Esophagus muscularis mucosa (tissue), 4 donors: ENCODE measurements at regions of chr7 and their contacts with region 1.

Region 1: DNA sequence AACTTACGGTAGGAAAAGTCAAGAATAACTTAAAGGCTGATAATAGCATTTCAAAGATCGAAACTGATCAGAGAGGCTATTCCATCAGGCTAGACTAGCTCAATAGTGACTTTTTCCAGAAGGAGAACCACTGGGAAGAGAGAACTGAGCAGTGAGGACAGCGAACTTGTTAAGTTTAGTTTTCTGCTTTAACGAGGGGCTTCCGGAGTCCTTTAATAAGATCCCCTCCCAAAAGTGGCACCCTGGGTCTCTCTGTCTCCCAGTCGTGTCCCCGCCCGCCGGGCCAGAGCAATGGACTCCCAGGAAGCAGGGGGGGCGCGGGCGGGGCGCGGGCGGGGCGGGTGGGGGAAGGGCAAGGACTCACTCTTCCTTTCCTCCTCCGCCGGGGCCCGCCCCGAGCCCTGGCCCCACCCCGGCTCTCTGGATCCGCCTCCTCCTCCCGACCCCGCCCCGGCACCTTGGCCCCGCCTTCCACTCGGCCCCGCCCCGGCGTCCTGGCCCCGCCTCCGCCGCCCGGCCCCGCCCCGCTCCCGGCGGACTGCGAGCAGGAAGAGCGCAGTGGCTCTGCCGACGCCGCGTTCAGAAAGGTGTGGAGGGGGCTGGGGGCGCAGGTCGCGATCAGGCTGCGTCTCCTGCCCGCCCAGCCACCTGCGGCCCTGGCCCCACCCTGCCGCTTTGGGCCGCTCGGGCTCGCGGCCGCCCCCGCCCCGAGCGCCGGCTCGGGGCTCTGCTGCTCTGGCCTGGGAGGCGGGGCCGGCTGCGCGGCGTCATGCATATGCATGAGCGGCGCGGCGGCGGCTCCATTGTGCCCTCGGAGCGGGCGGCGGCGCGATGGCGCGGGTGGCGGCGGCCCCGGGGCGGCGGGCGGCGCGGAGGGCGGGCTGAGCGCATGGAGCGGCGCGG is at the start of gene ZMIZ2:
- DNase-seq: peak; percentile 98
- H3K4me3 ChIP-seq: peak within 1 kb of the TSS; percentile 81 to 99 (median 87)
- H3K27ac ChIP-seq: peak within 1 kb of the TSS; percentile 97 to 99 (median 98)
- H3K4me1 ChIP-seq: peaks cover 27 to 41% (median 33%) of the 10 kb centered on the region in 4 donors
- H3K27me3 ChIP-seq: no peaks in the 10 kb centered on the region
- CTCF ChIP-seq: peak in 1 of 3 experiments; percentile 13
- EP300 ChIP-seq: no peak
- POLR2A ChIP-seq: no peak
- total RNA-seq, gene ZMIZ2: 12.4 to 36.0 (median 28.4) TPM

Region 2: GRCh38 chr7:44587843-44588711 is 160.2 kb before region 1 on chr7:
- intact Hi-C with region 1: loop called (anchors 5 kb)
- DNase-seq: no peak
- H3K4me3 ChIP-seq: no peak overlapping the region
- H3K27ac ChIP-seq: no peak overlapping the region
- H3K4me1 ChIP-seq: peaks cover 0 to 9% (median 4%) of the 10 kb centered on the region in 4 donors
- H3K27me3 ChIP-seq: no peaks in the 10 kb centered on the region
- CTCF ChIP-seq: peak; percentile 53 to 60 (median 55)
- EP300 ChIP-seq: no peak
- POLR2A ChIP-seq: no peak

Region 3: DNA sequence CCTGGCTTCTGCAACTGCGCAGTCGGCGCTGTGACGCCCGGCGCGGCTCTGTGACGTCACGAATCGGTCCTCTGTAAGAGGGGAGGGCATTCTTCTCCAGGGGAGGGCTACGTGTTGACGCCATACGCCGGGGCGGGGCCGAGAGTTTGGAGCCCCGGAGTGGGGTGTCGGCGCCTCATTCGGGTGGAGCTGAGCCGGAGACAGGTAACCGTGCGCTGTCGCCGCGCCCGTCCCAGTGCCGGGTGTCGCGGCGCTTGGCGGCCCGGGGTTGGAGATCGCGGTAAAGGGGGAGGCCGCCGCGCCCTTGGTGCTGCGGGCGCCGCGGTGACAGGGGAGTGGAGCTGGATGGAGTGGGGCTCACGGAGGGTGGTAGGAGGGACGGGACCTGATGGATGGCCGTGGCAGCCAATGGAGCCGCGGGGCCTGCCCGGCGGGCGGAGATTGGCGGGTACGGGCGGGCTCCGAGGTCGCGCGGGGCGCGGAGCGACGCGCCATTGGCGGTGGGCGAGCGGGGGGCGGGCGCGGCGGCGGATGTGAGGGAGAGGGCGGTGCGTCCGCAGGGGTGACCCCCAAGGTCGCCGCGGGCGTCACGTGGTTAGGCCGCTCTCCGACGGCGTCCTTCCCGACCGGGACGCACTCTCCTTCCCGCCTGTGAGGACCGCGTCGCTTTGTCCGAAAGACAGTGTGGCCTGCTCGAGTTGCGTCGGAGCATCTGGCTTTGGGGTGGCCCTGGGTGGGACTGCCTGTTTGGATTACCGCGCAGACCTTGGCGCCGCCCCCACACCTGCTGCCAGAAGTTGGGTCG is 141.6 kb before region 1 on chr7 and contains the start of gene OGDH:
- intact Hi-C with region 1: loop called (anchors 2 kb)
- DNase-seq: peak; percentile 100
- H3K4me3 ChIP-seq: peak within 1 kb of the TSS; percentile 77 to 86 (median 82)
- H3K27ac ChIP-seq: peak within 1 kb of the TSS; percentile 95 to 99 (median 98)
- H3K4me1 ChIP-seq: peaks cover 25 to 42% (median 36%) of the 10 kb centered on the region in 4 donors
- H3K27me3 ChIP-seq: no peaks in the 10 kb centered on the region
- CTCF ChIP-seq: no peak
- EP300 ChIP-seq: peak; percentile 74
- POLR2A ChIP-seq: peak; percentile 84
- total RNA-seq, gene OGDH: 135 to 184 (median 145) TPM

Region 4: GRCh38 chr7:44797329-44798251 is 49.3 kb after region 1 on chr7:
- intact Hi-C with region 1: loop called (anchors 2 kb)
- DNase-seq: peak; percentile 96
- H3K4me3 ChIP-seq: peak overlapping the region; percentile 75 to 91 (median 86)
- H3K27ac ChIP-seq: peak overlapping the region; percentile 95 to 100 (median 100)
- H3K4me1 ChIP-seq: peaks cover 25 to 46% (median 40%) of the 10 kb centered on the region in 4 donors
- H3K27me3 ChIP-seq: no peaks in the 10 kb centered on the region
- CTCF ChIP-seq: peak; percentile 22 to 38 (median 35)
- EP300 ChIP-seq: peak; percentile 45
- POLR2A ChIP-seq: no peak

Region 5: DNA sequence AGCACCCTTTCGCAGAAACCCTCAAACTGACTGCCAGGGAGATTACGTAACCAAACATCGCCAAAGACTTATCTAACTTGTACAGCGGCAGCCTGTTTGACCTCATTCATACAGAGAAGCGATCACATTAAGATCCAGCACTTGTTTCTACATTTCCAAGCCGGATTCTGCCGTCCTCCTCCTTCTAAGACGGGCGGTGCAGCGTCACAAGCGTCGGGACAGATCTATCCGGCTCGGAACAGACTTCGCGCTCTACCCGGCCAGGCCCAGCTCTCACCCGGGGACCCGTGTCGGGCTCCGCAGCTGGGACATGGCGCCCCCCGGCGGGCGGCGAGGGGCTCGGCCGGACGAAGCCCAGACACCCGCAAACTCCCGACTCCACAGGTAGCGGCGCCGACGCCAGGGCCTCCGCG is 99.2 kb after region 1 on chr7:
- intact Hi-C with region 1: loop called (anchors 5 kb)
- DNase-seq: peak; percentile 97
- H3K4me3 ChIP-seq: peak overlapping the region; percentile 79 to 87 (median 80)
- H3K27ac ChIP-seq: peak overlapping the region; percentile 92 to 99 (median 98)
- H3K4me1 ChIP-seq: peaks cover 28 to 51% (median 41%) of the 10 kb centered on the region in 4 donors
- H3K27me3 ChIP-seq: no peaks in the 10 kb centered on the region
- CTCF ChIP-seq: peak; percentile 87 to 92 (median 91)
- EP300 ChIP-seq: no peak
- POLR2A ChIP-seq: no peak

Region 6: DNA sequence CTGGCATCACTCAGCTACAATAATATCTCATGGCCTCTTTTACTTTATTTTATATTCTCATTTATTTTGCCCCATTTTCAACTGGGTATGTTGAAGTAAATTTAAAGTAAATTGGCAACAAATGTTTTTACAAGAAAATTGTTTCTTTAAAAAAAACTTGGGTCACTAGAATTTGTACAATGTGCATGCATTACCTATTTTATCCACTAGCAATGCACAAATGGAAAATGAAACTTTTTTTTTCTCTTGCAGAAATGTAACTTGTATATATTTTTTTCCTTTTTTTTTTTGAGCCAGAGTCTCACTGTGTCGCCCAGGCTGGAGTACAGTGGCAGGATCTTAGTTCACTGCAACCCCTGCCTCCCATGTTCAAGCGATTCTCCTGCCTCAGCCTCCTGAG is 109.9 kb after region 1 on chr7:
- intact Hi-C with region 1: no loop called
- DNase-seq: no peak
- H3K4me3 ChIP-seq: no peak overlapping the region
- H3K27ac ChIP-seq: no peak overlapping the region
- H3K4me1 ChIP-seq: peaks cover 0 to 8% (median 7%) of the 10 kb centered on the region in 4 donors
- H3K27me3 ChIP-seq: no peaks in the 10 kb centered on the region
- CTCF ChIP-seq: peak in 2 of 3 experiments; percentile 13 to 19
- EP300 ChIP-seq: no peak
- POLR2A ChIP-seq: no peak